ENCODE measurements at regions of chr1 and their contacts with region 1.

Region 1: DNA sequence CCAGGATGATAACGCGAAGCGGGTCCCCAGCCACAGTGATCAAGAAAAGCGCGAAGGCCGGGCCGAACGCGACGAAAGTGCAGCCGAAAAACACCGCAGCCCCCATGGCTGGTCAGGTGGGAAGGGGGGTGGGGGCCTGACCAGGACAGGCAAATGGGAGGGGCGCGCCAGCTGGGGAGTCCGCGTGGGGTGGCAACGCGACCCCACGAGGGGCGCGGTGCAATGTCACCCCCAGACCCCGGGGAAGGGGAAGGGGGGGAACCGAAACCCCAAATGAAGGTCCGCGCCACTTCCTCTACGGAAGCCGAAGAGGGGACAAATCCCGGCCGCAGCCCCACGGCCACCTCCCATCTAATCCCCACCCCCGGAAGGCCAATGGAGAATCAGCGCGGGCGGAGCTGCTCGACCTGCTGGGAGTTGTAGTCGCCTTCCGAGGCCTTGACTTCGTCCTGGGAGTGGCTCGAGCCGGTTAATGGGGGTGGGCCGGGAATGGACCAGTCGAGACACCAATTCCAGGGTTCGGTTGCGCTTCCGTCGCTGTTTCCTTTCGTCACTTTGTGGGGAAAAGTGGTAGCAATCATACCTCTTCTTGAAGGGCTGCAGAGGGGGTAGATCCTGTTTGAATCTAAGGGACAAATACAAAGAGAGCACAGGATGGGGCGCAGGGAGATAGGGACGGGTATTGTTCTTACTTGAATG is at the start of gene APH1A:
- DNase-seq: peak; percentile 97 to 98 (median 98)
- ATAC-seq: peak; percentile 99
- H3K4me3 ChIP-seq: peak within 1 kb of the TSS; percentile 92
- H3K27ac ChIP-seq: peak within 1 kb of the TSS; percentile 86
- H3K4me1 ChIP-seq: peaks cover 13 to 26% of the 10 kb centered on the region in 2 experiments
- H3K27me3 ChIP-seq: no peaks in the 10 kb centered on the region
- CTCF ChIP-seq: no peak
- EP300 ChIP-seq: no peak
- POLR2A ChIP-seq: peak; percentile 72
- RAD21 ChIP-seq: no peak
- polyA plus RNA-seq, gene APH1A: 5.6 to 6.0 TPM

Region 2: DNA sequence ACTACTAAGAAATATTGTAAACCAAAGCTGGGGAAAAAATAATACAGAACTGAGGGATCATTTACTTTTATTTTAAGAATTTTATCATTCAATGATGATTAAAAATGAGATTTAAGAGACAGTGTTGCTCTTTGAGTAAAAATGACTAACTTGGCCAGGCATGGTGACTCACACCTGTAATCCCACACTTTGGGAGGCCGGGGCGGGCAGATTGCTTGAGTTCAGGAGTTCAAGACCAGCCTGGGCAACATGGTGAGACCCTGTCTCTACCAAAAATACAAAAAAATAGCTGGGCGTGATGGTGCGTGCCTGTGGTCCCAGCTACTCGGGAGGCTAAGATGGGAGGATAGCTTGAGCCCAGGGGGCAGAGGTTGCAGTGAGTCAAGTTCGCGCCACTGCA is 141.0 kb before region 1 on chr1:
- CTCF ChIA-PET with region 1: no interaction called
- POLR2A ChIA-PET with region 1: no interaction called
- in situ Hi-C with region 1: no loop called
- intact Hi-C with region 1: no loop called
- DNase-seq: no peak
- ATAC-seq: no peak
- H3K4me3 ChIP-seq: no peak overlapping the region
- H3K27ac ChIP-seq: no peak overlapping the region
- H3K4me1 ChIP-seq: no peaks in the 10 kb centered on the region
- H3K27me3 ChIP-seq: no peaks in the 10 kb centered on the region
- CTCF ChIP-seq: no peak
- EP300 ChIP-seq: no peak
- POLR2A ChIP-seq: no peak
- RAD21 ChIP-seq: no peak

Region 3: GRCh38 chr1:150288822-150289221 is 20.0 kb after region 1 on chr1:
- CTCF ChIA-PET with region 1: no interaction called
- POLR2A ChIA-PET with region 1: interaction called, 15 read pairs
- in situ Hi-C with region 1: no loop called
- intact Hi-C with region 1: no loop called
- DNase-seq: peak in 1 of 4 experiments; percentile 39
- ATAC-seq: peak; percentile 11; the same call in 1 of the 3 replicates
- H3K4me3 ChIP-seq: no peak overlapping the region
- H3K27ac ChIP-seq: peak overlapping the region; percentile 20
- H3K4me1 ChIP-seq: peaks cover 14 to 30% of the 10 kb centered on the region in 2 experiments
- H3K27me3 ChIP-seq: no peaks in the 10 kb centered on the region
- CTCF ChIP-seq: no peak
- EP300 ChIP-seq: no peak
- POLR2A ChIP-seq: no peak
- RAD21 ChIP-seq: no peak

Region 4: GRCh38 chr1:150332651-150333290 is 63.9 kb after region 1 on chr1:
- CTCF ChIA-PET with region 1: no interaction called
- POLR2A ChIA-PET with region 1: no interaction called
- in situ Hi-C with region 1: no loop called
- intact Hi-C with region 1: no loop called
- DNase-seq: no peak
- ATAC-seq: no peak
- H3K4me3 ChIP-seq: no peak overlapping the region
- H3K27ac ChIP-seq: no peak overlapping the region
- H3K4me1 ChIP-seq: no peaks in the 10 kb centered on the region; a peak in 1 of 5 replicates
- H3K27me3 ChIP-seq: no peaks in the 10 kb centered on the region
- CTCF ChIP-seq: no peak
- EP300 ChIP-seq: no peak
- POLR2A ChIP-seq: no peak
- RAD21 ChIP-seq: no peak

Region 5: DNA sequence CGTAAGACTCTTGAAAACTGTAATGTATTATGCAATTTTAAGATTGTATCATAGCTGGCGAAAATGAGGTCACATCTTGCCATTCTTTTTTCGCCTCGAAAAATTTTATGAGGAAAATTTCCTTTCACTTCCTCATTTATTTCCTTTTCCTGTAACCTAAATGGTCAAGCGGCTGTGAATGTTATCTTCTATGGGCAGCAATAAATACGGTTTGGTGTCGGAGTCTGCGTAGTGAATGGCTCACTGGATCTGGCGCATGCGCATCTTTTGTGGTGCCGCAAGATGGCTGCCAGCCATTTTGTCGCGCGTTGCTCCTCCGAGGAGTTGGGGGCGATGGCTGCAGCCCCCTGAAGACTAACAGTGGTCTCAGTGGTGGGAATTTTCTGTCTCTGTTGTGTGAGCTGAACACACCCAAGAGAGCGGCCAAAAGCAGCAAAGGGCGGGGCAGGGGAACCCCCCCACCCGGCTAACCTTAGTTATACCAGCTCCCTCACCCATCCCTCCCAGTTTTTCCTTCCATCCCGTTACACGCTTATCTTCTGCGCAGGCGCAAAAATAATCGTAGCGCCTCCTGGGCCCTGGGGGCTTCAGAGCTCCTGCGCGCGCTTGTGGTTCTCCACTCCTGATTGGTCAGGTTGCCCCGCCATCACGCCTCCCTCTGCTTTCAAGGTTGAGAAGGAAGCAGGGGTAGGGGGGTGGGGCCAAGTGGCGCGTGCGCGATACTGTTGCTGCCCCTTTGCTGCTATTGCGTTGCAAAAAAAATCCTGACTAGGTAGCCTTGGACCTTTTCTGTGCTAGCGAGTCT is 94.8 kb after region 1 on chr1 and contains the start of gene RPRD2:
- CTCF ChIA-PET with region 1: no interaction called
- POLR2A ChIA-PET with region 1: no interaction called
- in situ Hi-C with region 1: no loop called
- intact Hi-C with region 1: loop called (anchors 5 kb)
- DNase-seq: peak; percentile 98 to 100 (median 99)
- ATAC-seq: peak; percentile 93
- H3K4me3 ChIP-seq: peak within 1 kb of the TSS; percentile 69
- H3K27ac ChIP-seq: peak within 1 kb of the TSS; percentile 99
- H3K4me1 ChIP-seq: peaks cover 8 to 13% of the 10 kb centered on the region in 2 experiments
- H3K27me3 ChIP-seq: no peaks in the 10 kb centered on the region
- CTCF ChIP-seq: peak in 1 of 3 experiments; percentile 9; a peak in 1 of 6 replicates
- EP300 ChIP-seq: peak; percentile 59; the same call in 1 of the 2 replicates
- POLR2A ChIP-seq: peak; percentile 96
- RAD21 ChIP-seq: no peak
- polyA plus RNA-seq, gene RPRD2: 1.5 to 4.4 TPM